GM10248 (cell line): ENCODE measurements at regions of chr6 and their contacts with region 1.

Region 1: GRCh38 chr6:152431-152830 is 139.9 kb upstream of the DUSP22 start:
- DNase-seq: no peak
- CTCF ChIP-seq: no peak

Region 2: GRCh38 chr6:168865-169455 is 16.5 kb after region 1 on chr6:
- CTCF ChIA-PET with region 1: interaction called, 38 read pairs
- POLR2A ChIA-PET with region 1: no interaction called
- DNase-seq: no peak
- CTCF ChIP-seq: peak; percentile 49

Region 3: GRCh38 chr6:181049-181654 is 28.7 kb after region 1 on chr6:
- CTCF ChIA-PET with region 1: interaction called, 13 read pairs
- POLR2A ChIA-PET with region 1: no interaction called
- DNase-seq: peak; percentile 65
- CTCF ChIP-seq: no peak

Region 4: DNA sequence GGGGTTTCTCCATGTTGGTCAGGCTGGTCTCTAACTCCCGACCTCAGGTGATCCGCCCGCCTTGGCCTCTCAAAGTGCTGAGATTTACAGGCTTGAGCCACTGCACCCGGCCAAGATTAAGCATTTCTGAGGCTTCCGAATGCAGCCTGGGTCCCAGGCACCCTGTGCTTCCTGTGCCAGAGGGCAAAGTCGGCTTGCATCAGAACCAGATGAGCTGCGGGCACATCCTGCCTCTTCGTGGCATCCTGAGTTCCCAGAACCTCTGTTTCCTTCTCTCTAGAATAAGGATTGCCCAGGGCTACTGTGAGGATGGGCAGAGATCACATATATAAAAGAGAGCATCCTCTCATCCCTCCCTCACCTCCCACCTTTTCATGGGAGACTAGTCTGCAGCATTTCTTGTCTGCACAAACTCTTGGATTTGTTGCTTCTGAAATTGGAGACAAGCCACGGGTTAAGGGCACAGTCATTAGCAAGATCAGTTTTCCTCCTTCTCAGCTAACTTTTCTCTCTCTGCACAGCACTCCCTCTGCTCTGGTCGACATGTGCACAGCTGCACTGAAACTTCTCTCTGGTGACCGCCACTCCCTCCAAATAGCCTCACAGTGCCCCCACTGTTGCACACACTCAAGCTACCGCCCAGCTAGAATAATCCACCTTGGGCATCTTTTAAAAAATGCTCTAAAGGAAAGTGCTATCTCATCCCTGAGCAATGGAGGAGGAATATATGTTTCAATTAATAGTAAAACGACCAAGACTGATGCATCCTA is 88.8 kb after region 1 on chr6:
- CTCF ChIA-PET with region 1: no interaction called
- POLR2A ChIA-PET with region 1: no interaction called
- DNase-seq: no peak
- CTCF ChIP-seq: no peak

Region 5: GRCh38 chr6:422433-423054 is 270.1 kb after region 1 on chr6:
- CTCF ChIA-PET with region 1: no interaction called
- POLR2A ChIA-PET with region 1: no interaction called
- DNase-seq: peak; percentile 83
- CTCF ChIP-seq: no peak